PC-9 (cell line): ENCODE measurements at regions of chr11 and their contacts with region 1.

Region 1: DNA sequence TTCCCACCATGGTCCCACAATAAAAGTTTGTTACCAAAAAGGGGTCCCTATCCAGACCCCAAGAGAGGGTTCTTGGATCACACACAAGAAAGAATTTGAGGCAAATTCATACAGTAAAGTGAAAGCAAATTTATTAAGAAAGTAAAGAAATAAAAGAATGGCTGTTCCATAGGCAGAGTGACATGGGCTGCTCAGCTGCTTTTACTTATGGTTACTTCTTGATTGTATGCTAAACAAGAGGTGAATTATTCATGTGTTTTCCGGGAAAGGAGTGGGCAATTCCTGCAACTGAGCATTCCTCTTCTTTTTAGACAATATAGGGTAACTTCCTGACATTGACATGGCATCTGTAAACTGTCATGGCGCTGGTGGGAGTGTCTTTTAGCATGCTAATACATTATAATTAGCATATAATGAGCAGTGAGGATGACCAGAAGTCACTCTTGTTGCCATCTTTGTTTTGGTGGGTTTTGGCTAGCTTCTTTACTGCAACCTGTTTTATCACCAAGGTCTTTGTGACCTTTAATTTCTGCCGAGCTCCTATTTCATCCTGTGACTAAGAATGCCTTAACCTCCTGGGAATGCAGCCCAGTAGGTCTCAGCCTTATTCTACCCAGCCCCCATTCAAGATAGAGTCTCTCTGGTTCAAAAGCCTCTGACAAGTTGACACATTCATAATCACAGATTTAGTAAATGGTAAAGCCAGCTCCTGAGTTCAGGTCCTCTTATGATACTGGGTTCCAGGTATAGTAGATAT is 240.7 kb upstream of the PDGFD start:
- DNase-seq: peak; percentile 41 to 74
- H3K4me3 ChIP-seq: no peak overlapping the region
- H3K27ac ChIP-seq: peak overlapping the region; percentile 54
- H3K4me1 ChIP-seq: peaks cover 58% of the 10 kb centered on the region
- H3K27me3 ChIP-seq: no peaks in the 10 kb centered on the region
- CTCF ChIP-seq: no peak

Region 2: DNA sequence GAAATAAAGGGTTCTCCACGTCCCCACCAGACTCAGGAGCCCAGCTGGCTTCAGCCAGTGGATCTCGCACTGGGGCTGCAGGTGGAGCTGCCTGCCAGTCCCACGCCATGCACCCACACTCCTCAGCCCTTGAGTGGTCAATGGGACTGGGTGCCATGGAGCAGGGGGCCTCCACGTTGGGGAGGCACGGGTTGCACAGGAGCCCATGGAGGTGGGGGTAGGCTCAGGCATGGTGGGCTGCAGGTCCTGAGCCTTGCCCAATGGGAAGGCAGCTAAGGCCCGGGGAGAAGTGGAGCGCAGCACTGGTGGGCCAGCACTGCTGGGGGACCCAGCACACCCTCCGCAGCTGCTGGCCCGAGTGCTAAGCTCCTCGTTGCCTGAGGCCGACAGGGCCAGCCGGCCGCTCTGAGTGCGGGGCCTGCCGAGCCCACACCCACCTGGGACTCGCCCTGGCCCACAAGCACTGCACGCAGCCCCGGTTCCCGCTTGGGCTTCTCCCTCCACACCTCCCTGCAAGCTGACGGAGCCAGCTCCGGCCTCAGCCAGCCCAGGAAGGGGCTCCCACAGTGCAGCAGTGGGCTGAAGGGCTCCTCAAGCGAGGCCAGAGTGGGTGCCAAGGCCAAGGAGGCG is 17.8 kb after region 1 on chr11:
- CTCF ChIA-PET with region 1: no interaction called
- POLR2A ChIA-PET with region 1: no interaction called
- intact Hi-C with region 1: no loop called
- DNase-seq: no peak
- H3K4me3 ChIP-seq: no peak overlapping the region
- H3K27ac ChIP-seq: no peak overlapping the region
- H3K4me1 ChIP-seq: no peaks in the 10 kb centered on the region
- H3K27me3 ChIP-seq: no peaks in the 10 kb centered on the region
- CTCF ChIP-seq: no peak

Region 3: GRCh38 chr11:104451197-104451893 is 46.7 kb after region 1 on chr11:
- CTCF ChIA-PET with region 1: no interaction called
- POLR2A ChIA-PET with region 1: no interaction called
- intact Hi-C with region 1: loop called (anchors 1 kb)
- DNase-seq: no peak
- H3K4me3 ChIP-seq: peak overlapping the region; percentile 30; the same call in 1 of the 2 replicates
- H3K27ac ChIP-seq: peak overlapping the region; percentile 91
- H3K4me1 ChIP-seq: peaks cover 46% of the 10 kb centered on the region
- H3K27me3 ChIP-seq: no peaks in the 10 kb centered on the region
- CTCF ChIP-seq: no peak

Region 4: GRCh38 chr11:104534278-104534677 is 129.7 kb after region 1 on chr11:
- CTCF ChIA-PET with region 1: no interaction called
- POLR2A ChIA-PET with region 1: no interaction called
- intact Hi-C with region 1: no loop called
- DNase-seq: peak in 1 of 2 experiments; percentile 31
- H3K4me3 ChIP-seq: no peak overlapping the region
- H3K27ac ChIP-seq: no peak overlapping the region
- H3K4me1 ChIP-seq: peaks cover 15% of the 10 kb centered on the region
- H3K27me3 ChIP-seq: no peaks in the 10 kb centered on the region
- CTCF ChIP-seq: no peak

Region 5: GRCh38 chr11:105081412-105082087 is 677.0 kb after region 1 on chr11:
- CTCF ChIA-PET with region 1: no interaction called
- POLR2A ChIA-PET with region 1: interaction called, 10 read pairs
- intact Hi-C with region 1: no loop called
- DNase-seq: no peak
- H3K4me3 ChIP-seq: no peak overlapping the region
- H3K27ac ChIP-seq: no peak overlapping the region
- H3K4me1 ChIP-seq: no peaks in the 10 kb centered on the region
- H3K27me3 ChIP-seq: no peaks in the 10 kb centered on the region
- CTCF ChIP-seq: no peak